ENCODE measurements at regions of chr4 and their contacts with region 1.

Region 1: DNA sequence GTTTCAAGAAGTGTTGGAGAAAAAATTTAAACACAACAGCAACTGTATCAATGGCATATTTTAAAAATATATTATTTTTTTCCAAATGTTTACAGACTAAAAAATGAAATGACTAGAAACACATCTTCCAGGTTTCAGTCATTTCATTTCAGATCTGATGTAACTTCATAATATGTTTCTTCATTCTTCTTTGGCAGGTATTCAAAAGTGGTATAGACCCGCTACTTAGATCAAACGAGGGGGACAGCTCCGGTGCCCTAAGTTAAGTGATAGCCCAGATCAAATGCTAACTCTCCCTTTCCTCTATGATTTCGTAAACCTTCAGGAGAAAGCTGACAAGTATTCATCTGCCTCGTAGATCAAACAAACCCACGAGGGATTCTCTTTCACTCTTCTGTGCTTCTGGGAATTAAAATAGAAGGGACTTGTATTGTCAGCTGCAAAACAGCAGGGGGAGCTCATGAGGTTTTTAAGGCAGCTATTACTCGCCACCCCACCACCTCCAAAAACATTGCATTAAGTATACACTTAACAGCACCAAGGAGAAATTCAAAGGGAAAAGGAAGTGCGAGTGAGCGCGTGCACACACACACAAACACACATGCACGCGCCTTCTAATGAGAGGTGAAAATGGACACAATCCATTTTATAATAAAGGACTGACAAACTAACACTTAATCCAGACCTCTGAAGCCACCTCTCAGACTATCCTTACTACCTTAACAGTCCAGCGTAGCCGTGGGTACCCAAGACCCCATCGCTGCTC is 21.4 kb downstream of the HELT start:
- DNase-seq: peak; percentile 3
- H3K4me3 ChIP-seq: peak overlapping the region; percentile 18; the same call in 1 of the 2 replicates
- H3K27me3 ChIP-seq: no peaks in the 10 kb centered on the region; the same call in none of the 2 replicates
- CTCF ChIP-seq: peak; percentile 78

Region 2: GRCh38 chr4:185023471-185023870 is 16.2 kb before region 1 on chr4:
- CTCF ChIA-PET with region 1: interaction called, 23 read pairs
- POLR2A ChIA-PET with region 1: no interaction called
- DNase-seq: no peak
- H3K4me3 ChIP-seq: no peak overlapping the region
- H3K27me3 ChIP-seq: peaks cover 28% of the 10 kb centered on the region
- CTCF ChIP-seq: no peak

Region 3: DNA sequence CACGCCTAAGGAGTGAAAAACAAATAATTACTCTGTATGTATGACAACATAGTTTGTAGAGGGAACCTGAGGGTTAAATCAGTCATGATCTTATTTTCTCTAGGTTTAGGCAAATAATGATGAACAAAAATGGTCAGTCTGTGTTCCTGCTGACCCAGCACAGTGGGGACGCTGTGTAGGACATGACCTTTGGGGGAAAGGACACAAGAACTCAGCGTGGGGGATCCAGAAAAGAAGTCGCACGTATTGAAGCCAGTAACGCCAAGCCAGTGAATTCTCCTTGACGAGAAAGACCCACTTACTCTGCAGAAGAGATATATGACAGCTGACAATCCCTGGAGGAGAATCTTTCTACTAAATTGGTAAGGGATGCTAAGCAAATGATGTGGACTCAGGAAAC is 15.2 kb after region 1 on chr4:
- CTCF ChIA-PET with region 1: interaction called, 20 read pairs
- POLR2A ChIA-PET with region 1: no interaction called
- DNase-seq: no peak
- H3K4me3 ChIP-seq: no peak overlapping the region
- H3K27me3 ChIP-seq: peaks cover 3% of the 10 kb centered on the region; the same call in 1 of the 2 replicates
- CTCF ChIP-seq: no peak